ENCODE measurements at regions of chr17 and their contacts with region 1.

Region 1: GRCh38 chr17:43483674-43484372 is at the start of gene DHX8:
- DNase-seq: peak; percentile 92 to 99 (median 97)
- ATAC-seq: peak; percentile 97 to 99 (median 98)
- H3K4me3 ChIP-seq: peak within 1 kb of the TSS; percentile 57 to 76 (median 62)
- H3K27ac ChIP-seq: peak within 1 kb of the TSS; percentile 29 to 77 (median 67)
- H3K4me1 ChIP-seq: peaks cover 12 to 22% (median 17%) of the 10 kb centered on the region in 3 donors
- H3K27me3 ChIP-seq: no peaks in the 10 kb centered on the region
- CTCF ChIP-seq: peak; percentile 100
- total RNA-seq, gene DHX8: 11.0 to 26.0 (median 16.8) TPM

Region 2: GRCh38 chr17:43175816-43176570 is 307.8 kb before region 1 on chr17:
- intact Hi-C with region 1: no loop called
- DNase-seq: no peak
- ATAC-seq: peak in 3 of 4 donors; percentile 47 to 54 (median 49)
- H3K4me3 ChIP-seq: no peak overlapping the region
- H3K27ac ChIP-seq: peak overlapping the region in 3 of 4 donors; percentile 6 to 65 (median 48)
- H3K4me1 ChIP-seq: peaks cover 27 to 50% (median 39%) of the 10 kb centered on the region in 3 donors
- H3K27me3 ChIP-seq: no peaks in the 10 kb centered on the region
- CTCF ChIP-seq: no peak

Region 3: GRCh38 chr17:43393944-43394482 is 89.8 kb before region 1 on chr17:
- intact Hi-C with region 1: loop called in 2 of 3 experiments (anchors 2 to 5 kb)
- DNase-seq: peak; percentile 88 to 95 (median 90)
- ATAC-seq: peak; percentile 67 to 73 (median 72)
- H3K4me3 ChIP-seq: peak overlapping the region in 2 of 4 donors; percentile 15 to 22
- H3K27ac ChIP-seq: no peak overlapping the region
- H3K4me1 ChIP-seq: peaks cover 0 to 8% (median 4%) of the 10 kb centered on the region in 3 donors
- H3K27me3 ChIP-seq: no peaks in the 10 kb centered on the region
- CTCF ChIP-seq: peak; percentile 87 to 95 (median 92)

Region 4: GRCh38 chr17:43528349-43528987 is 44.6 kb after region 1 on chr17:
- intact Hi-C with region 1: no loop called
- DNase-seq: peak in 5 of 6 donors; percentile 60 to 74 (median 64)
- ATAC-seq: peak in 3 of 4 donors; percentile 6 to 46 (median 33)
- H3K4me3 ChIP-seq: no peak overlapping the region
- H3K27ac ChIP-seq: peak overlapping the region in 3 of 4 donors; percentile 39 to 58 (median 56)
- H3K4me1 ChIP-seq: peaks cover 0 to 19% (median 16%) of the 10 kb centered on the region in 3 donors
- H3K27me3 ChIP-seq: no peaks in the 10 kb centered on the region
- CTCF ChIP-seq: no peak